Activated CD4-positive, alpha-beta memory T cell treated with anti-CD3 and anti-CD28 coated beads for 36 hours (primary cell): ENCODE measurements at regions of chr1 and their contacts with region 1.

Region 1: DNA sequence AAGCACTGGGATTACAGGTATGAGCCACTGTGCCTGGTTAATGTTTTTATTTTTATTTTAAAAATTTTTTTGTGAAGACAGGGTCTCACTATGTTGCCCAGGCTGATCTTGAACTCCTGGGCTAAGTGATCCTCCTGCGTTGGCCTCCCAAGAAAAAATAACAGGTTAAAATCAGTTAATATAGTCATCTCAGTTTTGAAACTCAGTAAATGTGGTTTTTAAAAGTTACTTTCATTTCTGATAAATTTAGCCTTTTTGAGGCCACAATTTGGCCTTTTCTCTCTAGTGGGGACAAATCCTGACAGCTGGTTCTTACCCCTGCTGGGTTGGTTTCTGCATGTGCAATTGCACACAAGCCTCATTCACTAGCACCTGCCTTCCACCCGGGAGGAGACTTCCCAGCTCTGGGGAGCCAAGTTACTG is 13.3 kb downstream of the PMF1 start:
- DNase-seq: peak; percentile 61
- H3K4me3 Mint-ChIP-seq: no peak overlapping the region
- H3K27ac Mint-ChIP-seq: peak overlapping the region; percentile 91
- H3K4me1 Mint-ChIP-seq: peaks cover 54% of the 10 kb centered on the region
- H3K27me3 Mint-ChIP-seq: no peaks in the 10 kb centered on the region

Region 2: GRCh38 chr1:156025877-156026276 is 200.2 kb before region 1 on chr1:
- CTCF ChIA-PET with region 1: no interaction called
- POLR2A ChIA-PET with region 1: no interaction called
- intact Hi-C with region 1: no loop called
- DNase-seq: peak; percentile 59
- H3K4me3 Mint-ChIP-seq: no peak overlapping the region
- H3K27ac Mint-ChIP-seq: no peak overlapping the region
- H3K4me1 Mint-ChIP-seq: peaks cover 6% of the 10 kb centered on the region
- H3K27me3 Mint-ChIP-seq: no peaks in the 10 kb centered on the region

Region 3: DNA sequence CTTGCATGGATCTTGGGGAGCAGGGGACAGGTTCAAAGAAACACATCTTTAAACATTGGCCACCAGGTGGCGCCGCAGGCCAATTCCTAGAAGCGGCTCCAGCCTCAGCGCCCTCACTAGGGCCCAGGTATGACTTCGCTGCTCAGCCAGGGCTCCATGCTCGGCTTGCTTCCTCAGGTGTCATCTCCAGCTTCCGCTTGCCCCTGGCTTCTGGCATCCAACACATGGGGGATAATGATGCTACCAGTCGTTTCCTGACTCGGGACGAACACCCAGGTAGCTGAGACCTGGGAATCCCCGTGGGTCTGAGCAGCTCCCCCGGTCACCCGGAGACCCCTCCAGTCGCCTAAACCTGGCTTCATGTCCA is 135.3 kb before region 1 on chr1:
- CTCF ChIA-PET with region 1: interaction called, 70 read pairs
- POLR2A ChIA-PET with region 1: interaction called, 29 read pairs
- intact Hi-C with region 1: loop called (anchors 1 kb)
- DNase-seq: peak; percentile 93
- H3K4me3 Mint-ChIP-seq: peak overlapping the region; percentile 10
- H3K27ac Mint-ChIP-seq: peak overlapping the region; percentile 42
- H3K4me1 Mint-ChIP-seq: peaks cover 13% of the 10 kb centered on the region
- H3K27me3 Mint-ChIP-seq: peaks cover 12% of the 10 kb centered on the region

Region 4: DNA sequence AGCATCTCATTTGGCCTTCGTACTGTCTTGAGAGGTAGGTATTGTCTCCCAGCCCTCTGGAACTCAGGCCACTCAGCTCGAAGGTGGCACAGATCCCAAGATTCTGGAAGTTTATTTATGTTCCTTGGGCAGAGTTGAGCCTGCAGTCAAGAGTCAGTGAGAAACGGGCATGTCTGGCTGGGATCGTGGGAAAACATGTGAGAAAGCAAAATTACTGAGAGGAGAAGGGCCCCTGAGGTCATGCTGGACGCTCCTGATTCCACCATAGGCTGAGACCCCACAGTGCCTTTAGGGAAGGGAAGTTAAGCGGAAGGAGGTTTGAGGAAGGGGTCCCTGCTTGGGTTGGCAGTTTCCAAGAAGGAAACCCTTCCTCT is 85.3 kb before region 1 on chr1:
- CTCF ChIA-PET with region 1: interaction called, 310 read pairs
- POLR2A ChIA-PET with region 1: interaction called, 15 read pairs
- intact Hi-C with region 1: loop called (anchors 1 kb)
- DNase-seq: no peak
- H3K4me3 Mint-ChIP-seq: no peak overlapping the region
- H3K27ac Mint-ChIP-seq: no peak overlapping the region
- H3K4me1 Mint-ChIP-seq: peaks cover 4% of the 10 kb centered on the region
- H3K27me3 Mint-ChIP-seq: no peaks in the 10 kb centered on the region

Region 5: GRCh38 chr1:156193488-156194299 is 32.4 kb before region 1 on chr1 and contains the start of gene SLC25A44:
- CTCF ChIA-PET with region 1: interaction called, 56 read pairs
- POLR2A ChIA-PET with region 1: interaction called, 12 read pairs
- intact Hi-C with region 1: no loop called
- DNase-seq: peak; percentile 99
- H3K4me3 Mint-ChIP-seq: peak within 1 kb of the TSS; percentile 100
- H3K27ac Mint-ChIP-seq: peak within 1 kb of the TSS; percentile 81
- H3K4me1 Mint-ChIP-seq: peaks cover 61% of the 10 kb centered on the region
- H3K27me3 Mint-ChIP-seq: no peaks in the 10 kb centered on the region
- total RNA-seq, gene SLC25A44: 61.3 to 62.2 TPM

Region 6: DNA sequence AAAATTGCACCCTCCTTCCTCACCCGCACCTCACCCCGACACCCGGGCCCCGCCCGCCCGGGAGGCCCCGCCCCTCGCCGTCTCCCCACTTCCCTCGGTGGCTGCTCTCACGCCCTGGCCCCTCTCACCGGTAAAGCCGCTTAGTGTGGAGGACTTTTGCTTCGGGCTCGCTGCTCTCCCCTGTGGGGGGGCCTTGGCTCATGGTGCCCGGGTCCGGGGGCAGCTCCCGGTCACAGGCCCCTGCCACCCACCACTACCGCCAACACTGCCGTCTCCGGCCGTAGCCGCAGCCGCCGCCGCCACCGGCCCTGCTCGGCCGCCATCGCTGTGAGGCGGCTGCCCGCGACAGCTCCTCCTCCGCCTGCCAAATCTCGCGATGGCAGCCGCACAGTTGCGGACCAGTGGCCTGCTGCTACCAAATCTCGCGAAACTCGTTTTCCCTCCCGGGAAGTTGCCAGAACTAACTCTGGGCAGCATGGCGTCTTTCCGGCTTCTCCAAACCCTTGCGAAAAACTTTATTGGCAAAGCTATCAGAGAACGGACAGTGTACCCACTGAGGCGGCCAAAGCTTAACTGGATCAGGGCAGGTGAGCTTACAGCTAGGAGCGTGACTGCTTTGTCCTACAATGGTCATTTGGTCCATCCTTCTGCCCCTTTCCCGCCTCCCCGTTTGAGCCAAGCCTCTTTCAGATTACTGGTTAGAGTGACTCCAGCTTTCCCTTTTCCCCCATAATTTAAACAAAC is 56.5 kb after region 1 on chr1 and contains the start of gene SMG5:
- CTCF ChIA-PET with region 1: interaction called, 5 read pairs
- POLR2A ChIA-PET with region 1: interaction called, 5 read pairs
- intact Hi-C with region 1: loop called (anchors 5 kb)
- DNase-seq: peak; percentile 98
- H3K4me3 Mint-ChIP-seq: peak within 1 kb of the TSS; percentile 95
- H3K27ac Mint-ChIP-seq: peak within 1 kb of the TSS; percentile 95
- H3K4me1 Mint-ChIP-seq: peaks cover 38% of the 10 kb centered on the region
- H3K27me3 Mint-ChIP-seq: no peaks in the 10 kb centered on the region
- total RNA-seq, gene SMG5: 65.1 to 68.0 TPM

Region 7: DNA sequence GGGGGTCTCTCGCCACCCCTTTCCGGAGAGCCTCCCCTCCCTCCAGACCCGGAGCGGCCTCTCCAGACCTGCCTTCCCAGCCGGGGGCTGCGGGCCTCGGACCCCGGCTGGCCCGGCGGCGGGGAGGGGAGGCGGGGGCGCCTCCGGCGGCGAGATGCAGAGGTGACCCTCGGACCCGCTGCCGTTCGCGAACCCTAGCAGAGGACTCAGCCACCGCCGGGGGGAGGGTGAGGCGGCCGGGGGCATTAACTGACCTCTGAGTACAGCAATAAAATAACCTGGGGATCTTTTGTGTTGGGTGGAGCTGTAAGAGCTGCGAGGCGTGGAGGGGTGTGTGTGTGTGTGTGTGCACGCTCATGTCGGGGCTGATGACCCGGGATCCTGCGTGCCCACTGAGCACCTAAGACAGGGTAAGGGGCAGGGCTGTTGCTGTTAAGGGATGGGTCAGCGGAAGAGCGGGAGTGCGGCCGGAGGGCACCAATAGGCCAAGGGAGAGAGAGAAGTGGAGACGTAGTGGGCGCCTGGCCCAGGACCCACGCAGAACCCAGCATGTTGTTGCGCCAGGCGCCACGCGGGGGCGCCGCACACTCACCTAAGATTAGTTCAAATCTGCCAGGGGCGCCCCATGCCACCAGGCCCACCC is 399.4 kb after region 1 on chr1:
- CTCF ChIA-PET with region 1: no interaction called
- POLR2A ChIA-PET with region 1: no interaction called
- intact Hi-C with region 1: no loop called
- DNase-seq: peak; percentile 64
- H3K4me3 Mint-ChIP-seq: peak overlapping the region; percentile 48
- H3K27ac Mint-ChIP-seq: no peak overlapping the region
- H3K4me1 Mint-ChIP-seq: peaks cover 10% of the 10 kb centered on the region
- H3K27me3 Mint-ChIP-seq: peaks cover 46% of the 10 kb centered on the region